Left ventricle myocardium superior (tissue), 1 donor: ENCODE measurements at regions of chr9 and their contacts with region 1.

Region 1: DNA sequence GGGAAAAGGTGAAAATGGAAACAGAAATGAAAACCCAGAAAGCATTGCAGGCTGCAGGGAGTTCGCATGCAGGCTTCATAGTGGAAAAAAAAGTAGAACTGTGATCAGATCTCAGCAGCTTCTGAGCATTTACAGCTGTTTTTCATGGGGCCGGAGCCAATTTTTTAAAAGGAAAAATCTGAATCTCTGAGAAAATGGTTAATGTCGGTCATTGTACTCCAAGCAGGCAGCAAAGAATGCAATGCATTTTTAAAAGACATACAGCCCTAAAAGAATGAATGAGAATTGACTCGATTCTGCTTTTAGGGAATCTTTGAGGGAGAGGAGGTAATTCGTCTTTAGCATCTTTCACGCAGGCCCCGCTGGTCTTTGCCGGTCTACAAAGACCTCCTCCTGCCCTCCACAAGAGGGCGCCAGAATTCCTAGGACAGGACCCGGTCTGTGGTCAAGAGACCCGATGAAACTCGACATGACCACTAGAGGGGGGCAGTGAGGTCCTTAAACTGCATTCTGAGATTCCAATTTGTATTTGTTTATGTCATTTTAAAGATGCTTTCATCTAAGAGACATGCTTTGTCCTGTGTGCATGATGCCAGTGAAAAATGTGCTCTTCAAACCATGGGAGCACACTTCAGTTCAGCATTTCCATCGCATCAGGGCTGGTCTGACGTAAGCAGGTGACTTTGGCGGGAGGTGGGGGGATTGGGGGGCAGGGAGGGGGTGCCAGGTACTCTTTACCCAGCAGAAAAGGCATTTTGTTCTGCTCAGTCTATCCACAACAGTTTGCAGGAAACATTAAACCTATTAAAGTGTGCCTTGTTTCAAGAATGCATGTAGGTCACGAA is 43.7 kb upstream of the TMEM252 start:
- DNase-seq: peak; percentile 83
- ATAC-seq: peak; percentile 98

Region 2: DNA sequence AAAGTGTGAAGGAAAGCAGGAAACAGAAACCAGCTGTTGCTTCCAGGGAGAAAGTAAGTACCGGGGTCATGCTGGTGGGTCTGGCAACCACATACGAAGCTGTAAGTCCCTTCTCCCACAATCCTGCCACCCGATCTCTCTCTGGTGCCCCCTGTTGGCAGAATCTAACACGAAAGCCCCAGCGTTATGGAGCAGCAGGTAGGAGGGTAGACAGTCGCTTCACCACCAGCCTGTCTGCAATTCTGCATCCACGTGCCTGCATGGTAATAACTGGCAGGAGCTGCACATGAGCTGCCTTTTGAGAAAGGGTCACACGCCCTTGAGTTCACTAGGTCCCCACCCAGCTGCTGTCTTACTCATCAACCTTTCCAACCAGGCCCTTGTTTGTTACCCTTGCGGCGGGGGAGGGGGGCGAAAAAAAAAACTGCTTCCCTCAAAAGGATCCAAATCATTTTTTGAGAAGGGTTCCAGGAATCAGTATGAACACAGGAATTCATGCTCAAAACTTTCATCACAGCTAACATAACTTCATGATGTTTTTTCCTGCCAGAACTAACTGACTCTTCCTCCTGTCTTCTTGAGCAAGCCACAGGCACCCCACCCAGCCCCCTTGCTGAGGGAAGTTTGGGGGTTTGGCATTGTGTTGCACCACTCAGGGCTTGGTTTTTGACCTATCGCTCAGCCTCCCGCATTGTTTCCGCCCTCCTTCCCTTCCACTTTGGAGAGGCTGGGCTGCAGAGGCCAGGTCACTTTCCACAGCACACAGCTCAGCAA is 24.2 kb before region 1 on chr9:
- intact Hi-C with region 1: no loop called
- DNase-seq: peak; percentile 56
- ATAC-seq: peak; percentile 69

Region 3: GRCh38 chr9:68999393-69000105 is 415.1 kb after region 1 on chr9:
- intact Hi-C with region 1: loop called (anchors 10 kb)
- DNase-seq: peak; percentile 37
- ATAC-seq: peak; percentile 95

Region 4: GRCh38 chr9:69027355-69028096 is 443.1 kb after region 1 on chr9:
- intact Hi-C with region 1: loop called (anchors 10 kb)
- DNase-seq: no peak
- ATAC-seq: peak; percentile 85